ENCODE measurements at regions of chr12 and their contacts with region 1.

Region 1: DNA sequence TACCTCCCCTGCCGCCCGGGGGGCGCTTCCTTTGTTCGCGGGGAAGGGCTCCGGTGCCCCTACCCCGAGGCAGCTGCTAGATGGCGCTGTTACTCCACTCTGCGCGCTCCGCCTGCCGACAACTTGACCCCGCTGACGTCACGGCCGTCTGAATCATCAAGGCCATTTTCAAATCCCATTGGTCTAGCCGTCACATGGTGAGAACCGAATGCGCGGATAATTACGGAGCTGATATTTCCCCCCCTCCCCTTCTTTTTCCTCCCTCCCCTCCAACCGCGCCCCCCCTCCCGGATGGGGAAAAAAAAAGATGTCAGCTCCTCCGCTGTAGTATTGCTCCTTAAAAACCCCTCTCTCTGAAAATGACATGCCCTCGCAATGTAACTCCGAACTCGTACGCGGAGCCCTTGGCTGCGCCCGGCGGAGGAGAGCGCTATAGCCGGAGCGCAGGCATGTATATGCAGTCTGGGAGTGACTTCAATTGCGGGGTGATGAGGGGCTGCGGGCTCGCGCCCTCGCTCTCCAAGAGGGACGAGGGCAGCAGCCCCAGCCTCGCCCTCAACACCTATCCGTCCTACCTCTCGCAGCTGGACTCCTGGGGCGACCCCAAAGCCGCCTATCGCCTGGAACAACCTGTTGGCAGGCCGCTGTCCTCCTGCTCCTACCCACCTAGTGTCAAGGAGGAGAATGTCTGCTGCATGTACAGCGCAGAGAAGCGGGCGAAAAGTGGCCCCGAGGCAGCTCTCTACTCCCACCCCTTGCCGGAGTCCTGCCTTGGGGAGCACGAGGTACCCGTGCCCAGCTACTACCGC is at the start of gene HOXC10:
- DNase-seq: peak; percentile 95
- ATAC-seq: peak; percentile 56
- H3K4me3 Mint-ChIP-seq: peak within 1 kb of the TSS; percentile 52
- H3K27ac Mint-ChIP-seq: no peak within 1 kb of the TSS
- H3K4me1 Mint-ChIP-seq: peaks cover 34% of the 10 kb centered on the region
- H3K27me3 Mint-ChIP-seq: peaks cover 100% of the 10 kb centered on the region
- CTCF ChIP-seq: peak; percentile 76
- total RNA-seq, gene HOXC10: 0.09 TPM in 1 of 3 replicates, not detected in the others

Region 2: GRCh38 chr12:53952871-53953734 is 32.0 kb before region 1 on chr12:
- CTCF ChIA-PET with region 1: interaction called, 15 read pairs
- POLR2A ChIA-PET with region 1: interaction called, 3 read pairs
- DNase-seq: peak; percentile 81
- ATAC-seq: peak; percentile 21
- H3K4me3 Mint-ChIP-seq: peak overlapping the region; percentile 23
- H3K27ac Mint-ChIP-seq: no peak overlapping the region
- H3K4me1 Mint-ChIP-seq: peaks cover 28% of the 10 kb centered on the region
- H3K27me3 Mint-ChIP-seq: peaks cover 100% of the 10 kb centered on the region
- CTCF ChIP-seq: no peak

Region 3: GRCh38 chr12:53995378-53996239 is 10.5 kb after region 1 on chr12:
- CTCF ChIA-PET with region 1: interaction called, 20 read pairs
- POLR2A ChIA-PET with region 1: no interaction called
- DNase-seq: peak; percentile 76
- ATAC-seq: peak; percentile 49
- H3K4me3 Mint-ChIP-seq: peak overlapping the region; percentile 56
- H3K27ac Mint-ChIP-seq: no peak overlapping the region
- H3K4me1 Mint-ChIP-seq: peaks cover 36% of the 10 kb centered on the region
- H3K27me3 Mint-ChIP-seq: peaks cover 100% of the 10 kb centered on the region
- CTCF ChIP-seq: no peak

Measured in WTC11 (cell line).